Activated CD4-positive, alpha-beta memory T cell treated with anti-CD3 and anti-CD28 coated beads for 36 hours (primary cell): ENCODE measurements at regions of chr20 and their contacts with region 1.

Region 1: GRCh38 chr20:59087829-59088433 is 45.3 kb upstream of the PRELID3B start:
- DNase-seq: peak; percentile 89
- H3K4me3 Mint-ChIP-seq: no peak overlapping the region
- H3K27ac Mint-ChIP-seq: no peak overlapping the region
- H3K4me1 Mint-ChIP-seq: peaks cover 4% of the 10 kb centered on the region
- H3K27me3 Mint-ChIP-seq: no peaks in the 10 kb centered on the region

Region 2: GRCh38 chr20:59102841-59103299 is 14.9 kb after region 1 on chr20:
- CTCF ChIA-PET with region 1: interaction called, 15 read pairs
- POLR2A ChIA-PET with region 1: no interaction called
- intact Hi-C with region 1: no loop called
- DNase-seq: no peak
- H3K4me3 Mint-ChIP-seq: no peak overlapping the region
- H3K27ac Mint-ChIP-seq: peak overlapping the region; percentile 18
- H3K4me1 Mint-ChIP-seq: peaks cover 13% of the 10 kb centered on the region
- H3K27me3 Mint-ChIP-seq: no peaks in the 10 kb centered on the region

Region 3: GRCh38 chr20:59141787-59142581 is 54.1 kb after region 1 on chr20:
- CTCF ChIA-PET with region 1: interaction called, 14 read pairs
- POLR2A ChIA-PET with region 1: no interaction called
- intact Hi-C with region 1: no loop called
- DNase-seq: no peak
- H3K4me3 Mint-ChIP-seq: no peak overlapping the region
- H3K27ac Mint-ChIP-seq: no peak overlapping the region
- H3K4me1 Mint-ChIP-seq: peaks cover 34% of the 10 kb centered on the region
- H3K27me3 Mint-ChIP-seq: no peaks in the 10 kb centered on the region

Region 4: GRCh38 chr20:59159493-59160376 is 71.8 kb after region 1 on chr20:
- CTCF ChIA-PET with region 1: interaction called, 7 read pairs
- POLR2A ChIA-PET with region 1: no interaction called
- intact Hi-C with region 1: loop called (anchors 5 kb)
- DNase-seq: peak; percentile 80
- H3K4me3 Mint-ChIP-seq: peak overlapping the region; percentile 83
- H3K27ac Mint-ChIP-seq: peak overlapping the region; percentile 96
- H3K4me1 Mint-ChIP-seq: peaks cover 87% of the 10 kb centered on the region
- H3K27me3 Mint-ChIP-seq: no peaks in the 10 kb centered on the region

Region 5: GRCh38 chr20:59184880-59185447 is 97.0 kb after region 1 on chr20:
- CTCF ChIA-PET with region 1: interaction called, 13 read pairs
- POLR2A ChIA-PET with region 1: no interaction called
- intact Hi-C with region 1: no loop called
- DNase-seq: peak; percentile 56
- H3K4me3 Mint-ChIP-seq: no peak overlapping the region
- H3K27ac Mint-ChIP-seq: no peak overlapping the region
- H3K4me1 Mint-ChIP-seq: peaks cover 44% of the 10 kb centered on the region
- H3K27me3 Mint-ChIP-seq: no peaks in the 10 kb centered on the region

Region 6: DNA sequence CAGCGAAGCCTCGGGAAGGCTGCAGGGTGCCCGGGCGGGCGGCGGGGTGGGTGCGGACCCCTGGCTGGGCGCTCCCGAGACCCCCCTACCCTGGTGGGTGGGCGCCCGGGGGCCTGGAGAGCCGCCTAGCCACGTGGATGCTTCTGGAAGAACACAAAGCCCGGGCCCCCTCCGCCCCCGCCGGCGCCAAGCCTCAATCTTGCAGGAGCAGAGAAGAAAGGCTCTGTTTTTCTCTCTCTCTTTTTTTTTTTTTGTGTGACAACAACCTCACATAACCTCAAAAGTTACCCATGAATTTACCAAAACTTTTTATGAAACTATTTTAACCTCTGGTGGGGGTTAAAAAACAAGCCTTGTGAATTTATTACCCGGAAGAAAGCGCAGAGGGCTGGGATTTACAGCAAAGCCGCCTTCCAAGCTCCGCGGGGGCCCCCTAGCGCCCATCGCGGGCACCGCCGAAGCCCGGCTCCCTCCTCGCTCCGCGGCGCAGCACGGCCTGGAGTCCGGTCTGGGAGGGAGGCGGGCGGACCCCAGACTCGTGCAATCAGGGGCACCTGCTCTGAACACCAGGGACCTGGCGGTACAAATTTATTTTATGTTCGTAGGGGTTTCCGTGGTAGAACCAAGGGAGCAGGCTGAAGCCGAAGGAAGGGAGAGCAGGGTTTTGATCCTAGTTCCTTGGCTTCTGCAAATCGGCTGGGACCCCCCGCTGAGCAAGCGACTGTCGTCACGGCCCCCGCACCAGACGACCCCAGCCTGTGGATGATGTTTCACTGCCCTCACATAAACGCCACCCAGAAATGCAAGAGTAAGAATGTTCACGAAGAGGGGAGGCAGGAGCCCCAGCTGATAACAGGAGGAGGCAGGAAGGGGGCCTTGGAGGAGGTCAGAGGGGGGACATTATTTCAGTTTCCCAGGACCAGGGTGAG is 134.6 kb after region 1 on chr20:
- CTCF ChIA-PET with region 1: interaction called, 52 read pairs
- POLR2A ChIA-PET with region 1: no interaction called
- intact Hi-C with region 1: loop called (anchors 1 kb)
- DNase-seq: peak; percentile 86
- H3K4me3 Mint-ChIP-seq: peak overlapping the region; percentile 68
- H3K27ac Mint-ChIP-seq: no peak overlapping the region
- H3K4me1 Mint-ChIP-seq: peaks cover 26% of the 10 kb centered on the region
- H3K27me3 Mint-ChIP-seq: no peaks in the 10 kb centered on the region